Heart right ventricle (tissue), 16 donors: ENCODE measurements at regions of chr5 and their contacts with region 1.

Region 1: GRCh38 chr5:132272311-132273210 is 15.1 kb downstream of the PDLIM4 start:
- DNase-seq: peak in 1 of 2 donors; percentile 60
- ATAC-seq: peak in 7 of 8 donors; percentile 23 to 57 (median 51)
- H3K4me3 ChIP-seq: peak overlapping the region in 2 of 10 donors; percentile 11 to 20
- H3K27ac ChIP-seq: no peak overlapping the region
- H3K4me1 ChIP-seq: peaks cover 0 to 15% (median 0%) of the 10 kb centered on the region in 9 donors
- H3K27me3 ChIP-seq: no peaks in the 10 kb centered on the region
- CTCF ChIP-seq: peak; percentile 72 to 91 (median 86)

Region 2: GRCh38 chr5:132238169-132238744 is 34.3 kb before region 1 on chr5:
- intact Hi-C with region 1: loop called in 1 of 10 experiments (anchors 5 kb)
- DNase-seq: peak; percentile 54 to 66
- ATAC-seq: peak; percentile 51 to 83 (median 78)
- H3K4me3 ChIP-seq: no peak overlapping the region
- H3K27ac ChIP-seq: no peak overlapping the region
- H3K4me1 ChIP-seq: peaks cover 0 to 2% (median 0%) of the 10 kb centered on the region in 9 donors
- H3K27me3 ChIP-seq: no peaks in the 10 kb centered on the region
- CTCF ChIP-seq: peak; percentile 72 to 88 (median 83)

Region 3: GRCh38 chr5:132369474-132370180 is 97.1 kb after region 1 on chr5 and contains the start of gene SLC22A5:
- intact Hi-C with region 1: loop called in 1 of 10 experiments (anchors 10 kb)
- DNase-seq: peak in 1 of 2 donors; percentile 73
- ATAC-seq: peak; percentile 81 to 87 (median 86)
- H3K4me3 ChIP-seq: peak within 1 kb of the TSS; percentile 51 to 82 (median 72)
- H3K27ac ChIP-seq: peak within 1 kb of the TSS; percentile 70 to 92 (median 90)
- H3K4me1 ChIP-seq: peaks cover 3 to 55% (median 21%) of the 10 kb centered on the region in 9 donors
- H3K27me3 ChIP-seq: no peaks in the 10 kb centered on the region
- CTCF ChIP-seq: no peak
- total RNA-seq, gene SLC22A5: 10.3 to 36.8 (median 12.5) TPM

Region 4: DNA sequence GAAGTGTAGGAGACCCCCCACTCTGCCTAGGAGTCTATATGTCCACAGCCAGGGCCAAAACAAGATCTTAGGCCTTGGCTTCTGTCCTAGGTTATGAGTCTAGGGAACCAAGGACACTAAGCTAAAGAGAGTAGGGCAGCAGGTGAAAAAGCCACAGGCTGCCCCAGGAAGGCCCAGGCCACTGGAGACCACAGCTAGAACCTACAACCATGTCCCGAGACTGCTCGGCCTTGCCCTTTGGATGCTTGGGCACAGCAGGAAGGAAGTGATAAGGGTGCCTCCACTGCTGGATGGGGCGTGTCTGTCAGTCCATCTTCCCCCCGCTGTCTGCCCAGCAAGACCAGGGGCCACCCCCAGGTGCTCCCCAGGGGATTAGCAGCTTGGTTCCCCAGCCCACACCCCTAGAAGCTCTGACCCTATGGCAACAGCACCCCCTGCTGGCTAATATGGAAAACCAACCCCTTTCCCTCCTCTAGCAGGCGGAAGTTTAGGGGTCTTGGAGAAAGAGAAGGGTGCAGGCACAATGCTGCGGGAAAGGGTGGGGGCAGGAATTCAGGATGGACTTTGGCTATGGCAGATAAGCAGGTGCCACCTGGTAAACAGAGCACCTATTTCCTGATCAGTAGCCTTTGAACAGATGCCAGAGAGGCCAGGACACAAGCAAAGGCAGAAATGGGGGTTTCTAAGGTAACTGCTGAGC is 228.5 kb after region 1 on chr5:
- intact Hi-C with region 1: loop called in 2 of 10 experiments (anchors 10 kb)
- DNase-seq: peak; percentile 55 to 73
- ATAC-seq: peak in 5 of 8 donors; percentile 10 to 46 (median 38)
- H3K4me3 ChIP-seq: no peak overlapping the region
- H3K27ac ChIP-seq: peak overlapping the region in 9 of 10 donors; percentile 0 to 100 (median 46)
- H3K4me1 ChIP-seq: peaks cover 15 to 69% (median 44%) of the 10 kb centered on the region in 9 donors
- H3K27me3 ChIP-seq: no peaks in the 10 kb centered on the region
- CTCF ChIP-seq: peak; percentile 77 to 89 (median 84)